Activated T-helper 1 cell treated with anti-CD3 and anti-CD28 coated beads, Interleukin-12 subunit alpha, Interleukin-12 subunit beta, Interleukin-2, Interleukin-4 antibody, amounts not matched to agents 30 ng/mL and 10 ng/mL and 1 ng/mL, durations not matched to agents 14 hours and 24 hours and 36 hours (primary cell): ENCODE measurements at regions of chr1 and their contacts with region 1.

Region 1: DNA sequence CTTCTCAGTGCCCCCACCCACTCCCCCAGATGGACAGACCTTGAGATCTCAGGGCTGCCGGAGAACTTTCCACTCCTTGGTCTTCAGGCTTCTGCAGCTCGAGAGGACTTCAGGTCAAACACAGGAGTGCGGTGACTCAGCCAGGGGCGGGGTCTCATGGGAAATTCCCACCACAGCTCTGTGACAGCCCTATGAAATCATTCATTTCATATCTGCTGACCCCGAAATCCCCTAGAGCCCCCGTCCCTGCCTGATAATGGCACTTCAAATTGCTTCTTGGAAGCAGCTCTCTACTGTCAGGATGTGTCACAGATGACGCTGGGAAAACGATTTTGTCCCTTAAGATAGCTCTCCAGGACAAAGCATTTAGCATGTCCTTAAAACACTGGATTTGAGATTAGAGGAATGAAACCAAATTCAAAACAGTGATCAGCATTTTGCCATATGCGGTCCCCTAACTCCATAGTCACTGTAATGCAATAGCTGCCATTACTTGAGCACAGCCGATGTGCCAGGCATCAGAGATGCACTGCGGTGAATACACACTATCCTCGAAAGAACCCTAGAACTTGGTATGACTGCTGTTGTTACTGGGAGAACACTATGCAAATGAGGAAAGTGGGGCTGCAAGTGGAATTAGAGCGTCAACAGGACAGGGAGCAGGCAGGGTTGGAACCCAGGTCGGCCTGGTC is at the start of gene TNFRSF9:
- DNase-seq: peak; percentile 58
- H3K4me3 Mint-ChIP-seq: peak within 1 kb of the TSS; percentile 88
- H3K27ac Mint-ChIP-seq: peak within 1 kb of the TSS; percentile 81
- H3K4me1 Mint-ChIP-seq: peaks cover 69% of the 10 kb centered on the region
- H3K27me3 Mint-ChIP-seq: peaks cover 13% of the 10 kb centered on the region
- total RNA-seq, gene TNFRSF9: 57.0 and 60.5 TPM in 2 replicates

Region 2: GRCh38 chr1:7207875-7208646 is 732.8 kb before region 1 on chr1:
- intact Hi-C with region 1: no loop called
- DNase-seq: peak; percentile 24
- H3K4me3 Mint-ChIP-seq: no peak overlapping the region
- H3K27ac Mint-ChIP-seq: no peak overlapping the region
- H3K4me1 Mint-ChIP-seq: no peaks in the 10 kb centered on the region
- H3K27me3 Mint-ChIP-seq: peaks cover 5% of the 10 kb centered on the region

Region 3: DNA sequence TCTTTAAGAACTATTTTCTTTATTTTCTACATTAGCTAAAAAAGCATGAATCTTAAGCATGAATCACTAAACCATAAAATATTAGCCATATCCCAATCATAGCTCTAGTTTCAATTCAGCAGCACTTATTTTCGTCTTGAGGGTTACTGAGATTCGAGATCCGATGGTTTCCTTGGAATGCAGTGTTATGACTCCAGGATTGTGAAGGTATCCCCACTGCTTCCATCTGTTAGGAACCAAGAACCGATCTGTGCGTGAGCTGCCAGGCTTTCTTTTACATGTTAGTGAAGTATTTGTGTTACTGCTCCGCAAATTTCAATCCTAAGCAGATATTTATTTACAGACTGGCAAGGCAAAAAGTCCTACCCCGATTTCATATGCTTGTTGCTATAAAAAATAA is 19.1 kb before region 1 on chr1:
- intact Hi-C with region 1: loop called (anchors 2 kb)
- DNase-seq: no peak
- H3K4me3 Mint-ChIP-seq: no peak overlapping the region
- H3K27ac Mint-ChIP-seq: peak overlapping the region; percentile 10
- H3K4me1 Mint-ChIP-seq: peaks cover 28% of the 10 kb centered on the region
- H3K27me3 Mint-ChIP-seq: no peaks in the 10 kb centered on the region

Region 4: GRCh38 chr1:7930645-7931445 is 10.0 kb before region 1 on chr1:
- intact Hi-C with region 1: loop called (anchors 1 kb)
- DNase-seq: no peak
- H3K4me3 Mint-ChIP-seq: peak overlapping the region; percentile 56
- H3K27ac Mint-ChIP-seq: peak overlapping the region; percentile 89
- H3K4me1 Mint-ChIP-seq: peaks cover 38% of the 10 kb centered on the region
- H3K27me3 Mint-ChIP-seq: peaks cover 6% of the 10 kb centered on the region

Region 5: GRCh38 chr1:7983086-7983778 is 42.3 kb after region 1 on chr1:
- intact Hi-C with region 1: loop called (anchors 1 kb)
- DNase-seq: no peak
- H3K4me3 Mint-ChIP-seq: no peak overlapping the region
- H3K27ac Mint-ChIP-seq: no peak overlapping the region
- H3K4me1 Mint-ChIP-seq: peaks cover 11% of the 10 kb centered on the region
- H3K27me3 Mint-ChIP-seq: no peaks in the 10 kb centered on the region

Region 6: DNA sequence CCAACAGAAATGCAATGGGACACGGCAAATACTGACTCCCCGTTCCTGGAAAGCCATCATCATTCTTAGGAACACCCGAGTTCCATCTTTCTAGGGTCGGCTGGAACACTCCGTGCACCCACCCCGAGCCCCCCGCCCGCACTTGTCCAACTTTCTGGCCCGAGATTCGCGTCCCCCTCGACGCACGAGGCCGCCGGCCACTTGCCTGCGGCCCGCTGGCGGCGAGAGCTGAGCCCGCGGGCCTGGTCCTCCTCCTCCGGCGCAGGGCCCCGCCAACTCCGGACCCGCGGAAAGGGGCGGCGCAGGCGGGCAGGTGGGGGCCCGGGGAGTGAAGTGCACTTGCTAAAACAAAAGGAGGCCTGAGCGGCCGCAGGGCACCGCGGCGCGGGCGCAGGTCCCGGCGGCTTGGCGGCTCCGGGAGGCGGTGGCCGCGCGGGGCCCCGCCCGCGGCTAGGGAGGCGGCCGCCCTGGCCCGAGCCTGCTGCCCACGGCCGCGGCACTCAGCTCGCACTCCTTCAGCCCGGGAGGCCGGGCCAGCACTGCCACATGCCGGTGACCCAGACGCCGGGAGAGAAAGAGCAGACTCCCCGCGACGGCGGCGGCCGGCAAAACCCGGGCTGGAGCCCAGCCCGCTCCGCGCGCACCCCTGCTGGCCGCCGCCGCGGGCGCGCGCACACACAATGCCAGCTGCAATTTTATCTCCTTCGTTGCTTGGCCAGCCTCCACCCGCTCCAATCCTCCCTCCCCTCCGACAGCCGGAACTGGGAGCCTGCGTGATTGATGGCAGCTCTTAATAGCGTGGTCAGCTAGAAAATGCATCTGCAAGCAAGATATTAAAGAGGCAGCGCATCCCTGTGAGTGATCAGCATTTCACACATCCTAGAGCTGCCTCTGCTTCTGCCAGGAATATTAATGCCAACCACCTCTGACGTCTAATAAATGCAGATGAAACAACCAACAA is 762.2 kb after region 1 on chr1:
- intact Hi-C with region 1: no loop called
- DNase-seq: peak; percentile 69
- H3K4me3 Mint-ChIP-seq: peak overlapping the region; percentile 97
- H3K27ac Mint-ChIP-seq: peak overlapping the region; percentile 89
- H3K4me1 Mint-ChIP-seq: peaks cover 58% of the 10 kb centered on the region
- H3K27me3 Mint-ChIP-seq: peaks cover 3% of the 10 kb centered on the region